WTC11 (cell line): ENCODE measurements at regions of chr1 and their contacts with region 1.

Region 1: DNA sequence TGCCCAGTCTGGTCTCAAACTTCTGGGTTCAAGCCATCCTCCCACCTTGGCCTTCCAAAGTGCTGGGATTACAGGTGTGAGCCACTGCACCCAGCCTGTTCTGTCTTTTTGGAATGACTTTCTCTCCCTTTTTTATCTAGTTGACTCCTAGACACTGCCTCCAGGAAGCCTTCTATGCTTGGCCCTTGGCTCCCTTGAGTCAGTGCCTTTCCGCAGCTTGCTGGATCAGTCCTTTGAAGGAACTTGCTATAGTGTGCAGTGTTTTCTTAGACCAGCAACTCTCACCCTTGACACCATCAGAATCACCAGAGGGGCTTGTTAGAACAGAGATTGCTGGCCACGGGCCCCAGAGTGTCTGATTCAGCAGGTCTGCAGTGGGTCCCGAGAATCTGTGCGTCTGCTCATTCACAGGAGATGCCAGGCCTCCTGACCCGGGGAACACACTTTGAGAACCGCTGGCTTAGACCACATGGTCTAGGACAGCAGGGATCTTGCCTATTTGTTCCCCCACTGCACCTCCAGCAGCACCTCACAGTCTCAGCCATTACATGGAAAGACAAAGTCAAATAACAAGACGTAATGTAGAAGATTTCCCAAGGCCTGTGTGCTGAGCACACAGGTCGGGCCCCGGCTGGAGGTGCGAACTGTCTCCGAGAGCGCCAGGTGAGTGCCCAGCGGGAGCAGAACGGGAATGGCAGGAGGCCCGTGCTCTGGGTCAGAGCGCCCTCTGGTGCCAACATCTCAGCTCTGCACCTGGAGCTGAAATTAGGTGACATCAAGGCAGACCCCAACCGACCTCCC is 27.4 kb upstream of the CTPS1 start:
- DNase-seq: peak; percentile 91
- ATAC-seq: peak; percentile 83
- H3K4me3 Mint-ChIP-seq: no peak overlapping the region
- H3K27ac Mint-ChIP-seq: no peak overlapping the region
- H3K4me1 Mint-ChIP-seq: peaks cover 15% of the 10 kb centered on the region
- H3K27me3 Mint-ChIP-seq: peaks cover 5% of the 10 kb centered on the region
- CTCF ChIP-seq: peak; percentile 92

Region 2: GRCh38 chr1:40774266-40774998 is 177.7 kb before region 1 on chr1:
- CTCF ChIA-PET with region 1: interaction called, 15 read pairs
- POLR2A ChIA-PET with region 1: no interaction called
- DNase-seq: peak; percentile 86
- ATAC-seq: peak; percentile 76
- H3K4me3 Mint-ChIP-seq: no peak overlapping the region
- H3K27ac Mint-ChIP-seq: peak overlapping the region; percentile 96
- H3K4me1 Mint-ChIP-seq: peaks cover 50% of the 10 kb centered on the region
- H3K27me3 Mint-ChIP-seq: peaks cover 2% of the 10 kb centered on the region; the same call in 1 of the 2 replicates
- CTCF ChIP-seq: peak; percentile 77

Region 3: DNA sequence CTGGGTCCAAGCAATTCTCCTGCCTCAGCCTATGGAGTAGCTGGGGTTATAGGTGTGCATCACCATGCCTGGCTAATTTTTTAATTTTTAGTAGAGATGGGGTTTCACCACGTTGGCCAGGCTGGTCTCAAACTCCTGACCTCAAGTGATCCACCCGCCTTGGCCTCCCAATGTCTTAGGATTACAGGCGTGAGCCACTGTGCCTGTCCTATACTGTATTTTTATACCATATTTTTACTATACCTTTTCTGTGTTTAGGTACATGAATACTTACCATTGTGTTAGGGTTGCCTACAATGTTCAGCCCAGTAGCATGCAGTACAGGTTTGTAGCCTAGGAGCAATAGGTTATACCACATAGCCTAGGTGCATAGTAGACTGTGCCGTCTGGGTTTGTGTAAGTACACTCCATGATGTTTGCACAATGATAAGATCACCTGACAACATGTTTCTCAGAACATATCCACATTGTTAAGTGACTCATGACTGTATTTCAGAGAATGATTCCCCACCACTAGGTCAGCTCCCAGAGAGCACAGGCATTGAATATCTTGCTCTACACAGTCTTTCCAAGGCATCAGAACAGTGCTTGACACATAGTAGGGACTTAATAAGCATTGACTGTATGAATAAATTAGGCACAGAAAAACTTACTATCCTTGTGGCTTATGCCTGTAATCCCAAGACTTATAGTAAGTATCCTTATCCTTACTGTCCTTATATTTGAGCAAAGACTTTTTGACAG is 83.9 kb before region 1 on chr1:
- CTCF ChIA-PET with region 1: interaction called, 515 read pairs
- POLR2A ChIA-PET with region 1: interaction called, 46 read pairs
- DNase-seq: no peak
- ATAC-seq: no peak
- H3K4me3 Mint-ChIP-seq: no peak overlapping the region
- H3K27ac Mint-ChIP-seq: no peak overlapping the region
- H3K4me1 Mint-ChIP-seq: peaks cover 4% of the 10 kb centered on the region; the same call in 1 of the 2 replicates
- H3K27me3 Mint-ChIP-seq: peaks cover 7% of the 10 kb centered on the region
- CTCF ChIP-seq: no peak

Region 4: GRCh38 chr1:40915581-40915980 is 36.6 kb before region 1 on chr1:
- CTCF ChIA-PET with region 1: interaction called, 10 read pairs
- POLR2A ChIA-PET with region 1: no interaction called
- DNase-seq: no peak
- ATAC-seq: no peak
- H3K4me3 Mint-ChIP-seq: no peak overlapping the region
- H3K27ac Mint-ChIP-seq: no peak overlapping the region
- H3K4me1 Mint-ChIP-seq: peaks cover 4% of the 10 kb centered on the region; the same call in 1 of the 2 replicates
- H3K27me3 Mint-ChIP-seq: no peaks in the 10 kb centered on the region; the same call in 1 of the 2 replicates
- CTCF ChIP-seq: no peak

Region 5: DNA sequence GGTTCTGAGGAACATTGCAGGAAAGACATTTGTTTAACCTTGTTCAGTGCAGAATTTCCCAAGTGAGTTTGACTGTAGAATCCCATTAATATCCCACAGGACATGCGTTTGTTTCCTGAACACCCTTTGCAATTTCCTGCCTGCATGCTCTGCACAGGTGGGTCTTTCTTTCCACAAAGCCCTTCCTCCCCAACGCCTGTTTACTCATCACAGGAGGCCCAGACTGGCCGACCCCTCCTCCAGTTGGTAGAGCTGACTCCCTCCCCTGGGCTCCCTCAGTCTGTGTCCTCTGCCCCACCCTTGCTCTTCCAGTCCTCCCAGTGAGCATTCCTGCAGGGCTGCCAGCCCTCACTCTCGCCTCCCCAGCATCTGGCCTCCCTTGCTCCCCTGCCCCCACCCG is 20.1 kb before region 1 on chr1:
- CTCF ChIA-PET with region 1: interaction called, 70 read pairs
- POLR2A ChIA-PET with region 1: interaction called, 5 read pairs
- DNase-seq: peak; percentile 13
- ATAC-seq: peak; percentile 81
- H3K4me3 Mint-ChIP-seq: no peak overlapping the region
- H3K27ac Mint-ChIP-seq: peak overlapping the region; percentile 71; the same call in 1 of the 2 replicates
- H3K4me1 Mint-ChIP-seq: peaks cover 18% of the 10 kb centered on the region
- H3K27me3 Mint-ChIP-seq: no peaks in the 10 kb centered on the region
- CTCF ChIP-seq: no peak

Region 6: DNA sequence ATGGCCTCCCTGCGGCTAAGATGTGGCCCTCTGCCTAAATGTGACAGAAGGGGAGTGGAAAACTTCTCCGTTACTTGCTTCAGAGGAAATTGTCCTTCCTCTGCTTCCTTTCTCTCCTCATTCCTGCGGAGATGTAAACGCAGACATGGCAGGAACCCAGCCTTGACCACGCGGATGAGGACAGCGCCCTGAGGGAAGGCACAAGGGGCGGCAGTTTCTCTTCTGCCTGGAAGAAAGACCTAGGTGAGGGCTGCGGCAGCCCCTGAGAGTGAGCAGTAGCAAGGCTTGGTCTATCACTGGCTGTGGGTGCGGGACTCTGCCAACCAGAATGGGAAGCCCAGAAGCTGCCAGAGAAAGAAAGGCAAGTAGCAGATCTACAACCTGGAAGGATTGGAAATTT is 13.4 kb after region 1 on chr1:
- CTCF ChIA-PET with region 1: interaction called, 15 read pairs
- POLR2A ChIA-PET with region 1: interaction called, 3 read pairs
- DNase-seq: no peak
- ATAC-seq: peak; percentile 69
- H3K4me3 Mint-ChIP-seq: no peak overlapping the region
- H3K27ac Mint-ChIP-seq: no peak overlapping the region
- H3K4me1 Mint-ChIP-seq: peaks cover 15% of the 10 kb centered on the region
- H3K27me3 Mint-ChIP-seq: peaks cover 6% of the 10 kb centered on the region
- CTCF ChIP-seq: no peak